MCF 10A (cell line): ENCODE measurements at regions of chr11 and their contacts with region 1.

Region 1: DNA sequence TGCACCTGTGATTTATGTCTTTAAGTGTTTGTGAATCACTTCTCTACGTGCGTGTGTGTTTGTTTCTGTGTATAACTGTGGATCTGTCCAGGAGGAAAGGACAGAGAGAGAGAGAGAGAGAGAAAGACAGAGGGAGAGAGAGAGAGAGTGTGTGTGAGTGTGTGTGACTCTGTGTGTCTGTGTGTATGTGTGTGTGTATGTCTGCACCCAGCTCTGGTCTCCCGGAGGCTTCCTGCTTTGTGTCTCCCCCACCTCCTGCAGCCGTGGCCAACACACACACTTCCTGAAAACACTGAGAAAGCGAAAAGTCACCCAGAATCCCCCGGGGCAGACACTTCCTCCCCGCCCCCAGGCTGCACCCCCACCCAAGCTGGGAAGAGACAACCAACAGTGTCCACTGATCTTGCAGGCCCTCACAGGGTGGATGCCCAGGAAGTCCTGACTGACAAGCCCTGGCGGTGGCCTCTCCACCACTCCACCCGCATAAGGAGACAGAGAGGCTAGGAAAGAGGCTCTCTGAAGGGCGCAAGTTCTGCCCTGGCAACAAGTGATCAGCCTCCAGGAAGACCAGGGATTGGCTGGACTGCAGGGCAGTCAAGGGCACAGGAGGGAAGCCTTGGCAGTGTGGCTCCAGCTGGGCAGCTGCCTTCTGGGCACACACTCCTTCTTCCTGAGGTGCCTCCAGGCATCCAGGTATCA is 30.0 kb downstream of the ARAP1 start:
- DNase-seq: peak; percentile 90
- H3K4me3 Mint-ChIP-seq: peak overlapping the region; percentile 81
- H3K27ac Mint-ChIP-seq: peak overlapping the region; percentile 89
- H3K4me1 Mint-ChIP-seq: peaks cover 21% of the 10 kb centered on the region
- H3K27me3 Mint-ChIP-seq: no peaks in the 10 kb centered on the region
- CTCF ChIP-seq: no peak

Region 2: GRCh38 chr11:72598906-72599305 is 123.3 kb before region 1 on chr11:
- CTCF ChIA-PET with region 1: no interaction called
- POLR2A ChIA-PET with region 1: no interaction called
- intact Hi-C with region 1: no loop called
- DNase-seq: peak; percentile 27
- H3K4me3 Mint-ChIP-seq: no peak overlapping the region
- H3K27ac Mint-ChIP-seq: no peak overlapping the region
- H3K4me1 Mint-ChIP-seq: peaks cover 11% of the 10 kb centered on the region
- H3K27me3 Mint-ChIP-seq: peaks cover 52% of the 10 kb centered on the region
- CTCF ChIP-seq: peak; percentile 18

Region 3: DNA sequence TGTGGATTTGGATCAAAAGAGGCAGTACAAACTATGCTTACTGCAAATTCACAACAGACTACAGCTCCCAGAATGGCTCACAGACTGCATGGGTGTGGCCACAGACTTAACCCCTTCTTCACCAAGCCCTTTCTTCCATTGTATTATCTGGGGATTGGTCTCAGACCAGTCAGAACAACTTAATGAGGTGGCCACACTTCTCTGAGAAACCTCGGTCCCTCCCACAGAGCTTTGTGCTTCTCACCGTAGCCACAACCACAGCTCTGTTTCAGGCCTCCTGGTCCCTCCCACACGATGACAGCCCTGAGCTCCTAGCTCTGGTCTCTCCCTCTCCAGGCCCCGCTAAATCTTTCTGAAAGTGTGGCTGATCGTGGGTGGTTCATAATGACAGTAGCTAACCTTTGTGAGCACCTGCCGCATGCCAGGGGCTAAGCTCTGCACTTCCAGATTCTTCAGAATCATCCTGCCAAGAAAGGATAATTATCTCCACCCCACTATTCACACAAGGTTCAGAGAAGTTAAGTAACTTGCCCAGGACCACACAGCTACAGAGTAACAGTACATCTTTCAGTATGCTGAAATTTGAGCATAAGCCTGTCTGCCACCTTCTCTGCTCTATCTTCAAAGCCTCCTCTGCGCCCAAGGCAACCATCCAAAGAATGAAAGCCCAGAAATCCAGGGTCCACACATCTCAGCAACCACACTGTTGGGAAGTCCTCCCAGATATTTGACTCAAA is 53.4 kb before region 1 on chr11:
- CTCF ChIA-PET with region 1: no interaction called
- POLR2A ChIA-PET with region 1: no interaction called
- intact Hi-C with region 1: no loop called
- DNase-seq: no peak
- H3K4me3 Mint-ChIP-seq: no peak overlapping the region
- H3K27ac Mint-ChIP-seq: no peak overlapping the region
- H3K4me1 Mint-ChIP-seq: no peaks in the 10 kb centered on the region
- H3K27me3 Mint-ChIP-seq: peaks cover 46% of the 10 kb centered on the region
- CTCF ChIP-seq: no peak

Region 4: GRCh38 chr11:72696866-72697700 is 25.1 kb before region 1 on chr11:
- CTCF ChIA-PET with region 1: no interaction called
- POLR2A ChIA-PET with region 1: no interaction called
- intact Hi-C with region 1: no loop called
- DNase-seq: no peak
- H3K4me3 Mint-ChIP-seq: no peak overlapping the region
- H3K27ac Mint-ChIP-seq: no peak overlapping the region
- H3K4me1 Mint-ChIP-seq: no peaks in the 10 kb centered on the region
- H3K27me3 Mint-ChIP-seq: no peaks in the 10 kb centered on the region
- CTCF ChIP-seq: no peak

Region 5: DNA sequence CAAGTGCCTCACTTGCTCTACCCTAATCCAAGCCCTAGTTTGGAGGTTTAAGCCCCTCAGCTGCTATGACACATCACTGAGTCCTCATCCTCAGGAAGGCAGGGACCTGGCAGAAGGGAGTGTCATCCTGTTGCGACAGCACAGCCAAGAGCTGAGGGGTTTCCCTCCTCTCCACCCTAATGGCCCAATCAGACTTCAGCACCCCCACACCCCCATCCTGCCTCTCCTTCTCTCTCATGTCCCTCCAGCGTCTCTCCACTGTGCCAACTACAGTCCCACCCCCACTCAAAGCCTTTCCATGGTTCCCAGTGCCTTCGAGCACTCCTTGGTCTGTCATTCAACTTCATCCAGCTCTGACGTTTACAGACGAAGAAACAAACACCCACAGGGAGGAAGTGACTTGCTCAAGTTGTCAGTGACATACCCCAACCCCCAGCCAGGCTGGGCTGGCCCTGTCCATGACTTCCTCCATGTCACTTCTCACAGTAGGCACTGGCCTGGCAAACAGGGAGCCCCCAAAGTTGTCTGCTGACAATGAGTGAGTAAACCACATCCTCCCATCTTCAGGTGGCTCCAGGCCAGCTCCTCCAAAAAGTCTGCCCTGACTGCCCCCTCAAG is 14.4 kb after region 1 on chr11:
- CTCF ChIA-PET with region 1: interaction called, 17 read pairs
- POLR2A ChIA-PET with region 1: interaction called, 5 read pairs
- intact Hi-C with region 1: no loop called
- DNase-seq: peak; percentile 80
- H3K4me3 Mint-ChIP-seq: no peak overlapping the region
- H3K27ac Mint-ChIP-seq: peak overlapping the region; percentile 90
- H3K4me1 Mint-ChIP-seq: peaks cover 45% of the 10 kb centered on the region
- H3K27me3 Mint-ChIP-seq: no peaks in the 10 kb centered on the region
- CTCF ChIP-seq: no peak

Region 6: GRCh38 chr11:72781313-72782050 is 59.3 kb after region 1 on chr11:
- CTCF ChIA-PET with region 1: interaction called, 10 read pairs
- POLR2A ChIA-PET with region 1: interaction called, 3 read pairs
- intact Hi-C with region 1: no loop called
- DNase-seq: no peak
- H3K4me3 Mint-ChIP-seq: peak overlapping the region; percentile 57
- H3K27ac Mint-ChIP-seq: no peak overlapping the region
- H3K4me1 Mint-ChIP-seq: peaks cover 15% of the 10 kb centered on the region
- H3K27me3 Mint-ChIP-seq: no peaks in the 10 kb centered on the region
- CTCF ChIP-seq: no peak

Region 7: GRCh38 chr11:72793425-72794367 is 71.5 kb after region 1 on chr11 and contains the start of gene STARD10:
- CTCF ChIA-PET with region 1: interaction called, 85 read pairs
- POLR2A ChIA-PET with region 1: interaction called, 57 read pairs
- intact Hi-C with region 1: loop called (anchors 1 kb)
- DNase-seq: peak; percentile 96
- H3K4me3 Mint-ChIP-seq: peak within 1 kb of the TSS; percentile 89
- H3K27ac Mint-ChIP-seq: peak within 1 kb of the TSS; percentile 97
- H3K4me1 Mint-ChIP-seq: peaks cover 17% of the 10 kb centered on the region
- H3K27me3 Mint-ChIP-seq: no peaks in the 10 kb centered on the region
- CTCF ChIP-seq: peak; percentile 93
- total RNA-seq, gene STARD10: 10.6 and 16.9 TPM in 2 replicates

Region 8: DNA sequence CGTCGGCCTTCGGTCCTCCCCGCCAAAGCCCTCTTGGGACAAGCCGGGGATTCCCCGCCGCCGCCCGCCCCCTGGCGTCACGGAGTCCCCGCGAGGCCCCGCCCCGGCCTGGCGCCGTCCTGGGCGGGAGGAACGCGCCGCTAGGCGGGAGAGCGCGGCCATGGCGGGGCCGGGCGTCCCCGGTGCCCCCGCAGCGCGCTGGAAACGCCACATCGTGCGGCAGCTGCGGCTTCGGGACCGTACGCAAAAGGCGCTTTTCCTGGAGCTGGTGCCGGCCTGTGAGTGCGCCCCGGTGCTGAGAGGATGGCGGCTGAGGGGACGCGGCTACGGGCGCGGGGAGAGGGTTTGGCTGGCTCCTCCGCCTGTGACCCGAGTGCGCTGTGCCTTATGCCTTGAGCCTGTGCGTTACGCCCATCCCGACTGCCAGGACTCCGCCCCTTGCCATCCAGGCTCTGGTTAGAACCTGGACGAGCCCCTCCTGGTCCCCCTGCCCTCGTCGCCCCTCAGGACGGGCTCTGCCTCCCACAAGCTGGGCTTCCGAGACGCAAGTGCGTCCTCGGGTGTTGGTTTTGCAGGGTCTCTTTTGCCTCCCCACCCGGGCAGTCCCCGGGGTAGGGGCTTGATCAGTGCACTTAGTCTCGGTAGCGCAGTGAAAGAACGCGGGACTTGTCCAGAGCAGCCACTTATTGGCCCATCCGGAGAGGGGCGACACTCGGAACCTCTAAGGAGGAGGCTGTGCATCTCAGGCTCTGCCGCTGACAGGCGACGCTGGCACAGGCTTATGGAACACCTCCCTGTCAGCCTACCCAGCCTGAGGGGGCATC is 92.3 kb after region 1 on chr11 and contains the start of gene ATG16L2:
- CTCF ChIA-PET with region 1: interaction called, 6 read pairs
- POLR2A ChIA-PET with region 1: interaction called, 10 read pairs
- intact Hi-C with region 1: loop called (anchors 1 kb)
- DNase-seq: peak; percentile 87
- H3K4me3 Mint-ChIP-seq: peak within 1 kb of the TSS; percentile 100
- H3K27ac Mint-ChIP-seq: peak within 1 kb of the TSS; percentile 98
- H3K4me1 Mint-ChIP-seq: peaks cover 26% of the 10 kb centered on the region
- H3K27me3 Mint-ChIP-seq: no peaks in the 10 kb centered on the region
- CTCF ChIP-seq: no peak
- total RNA-seq, gene ATG16L2: 9.9 and 11.2 TPM in 2 replicates

Region 9: DNA sequence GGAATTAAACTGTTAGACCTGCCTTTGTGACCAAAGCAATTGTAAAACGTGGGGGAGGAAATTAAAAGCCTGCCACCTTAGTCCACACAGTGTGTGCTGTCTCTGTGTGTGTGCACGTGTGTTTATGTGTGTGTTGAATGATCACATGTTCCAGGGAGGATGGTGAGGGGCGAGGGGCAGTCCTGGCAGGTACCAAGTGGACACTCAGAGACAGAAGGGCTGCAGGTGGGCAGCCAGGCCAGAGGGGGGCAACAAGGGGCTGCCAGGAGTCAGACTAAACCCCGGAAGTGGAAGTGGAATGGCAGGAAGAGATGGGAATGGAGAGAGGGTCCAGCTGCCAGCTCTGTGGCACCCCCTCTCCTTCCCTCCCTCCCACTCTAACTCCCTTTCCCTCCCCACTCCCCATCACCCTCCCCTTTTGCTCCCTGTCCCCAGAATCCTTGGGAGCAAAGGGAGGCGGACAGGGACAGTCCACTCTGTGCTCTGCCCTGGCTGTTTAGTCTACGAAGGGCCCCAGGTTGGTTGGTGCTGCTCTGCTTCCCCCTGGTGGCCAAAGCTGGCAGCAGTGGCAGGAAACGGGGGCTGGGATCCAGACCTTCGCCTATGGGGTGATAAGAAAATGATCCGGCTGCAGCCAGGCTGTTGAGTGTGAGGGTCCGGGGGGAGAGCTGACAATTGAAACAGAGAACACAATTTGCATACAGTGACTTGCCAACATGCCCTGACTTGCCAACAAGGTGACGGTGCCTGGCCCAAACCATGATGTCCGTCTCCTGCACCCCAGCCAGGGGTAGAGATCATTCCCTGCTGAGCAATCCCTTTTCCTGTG is 520.3 kb after region 1 on chr11:
- CTCF ChIA-PET with region 1: no interaction called
- POLR2A ChIA-PET with region 1: no interaction called
- intact Hi-C with region 1: loop called (anchors 10 kb)
- DNase-seq: peak; percentile 70
- H3K4me3 Mint-ChIP-seq: no peak overlapping the region
- H3K27ac Mint-ChIP-seq: no peak overlapping the region
- H3K4me1 Mint-ChIP-seq: peaks cover 12% of the 10 kb centered on the region
- H3K27me3 Mint-ChIP-seq: peaks cover 12% of the 10 kb centered on the region
- CTCF ChIP-seq: peak; percentile 98